ENCODE measurements at regions of chr1 and their contacts with region 1.

Region 1: GRCh38 chr1:8987881-8988617 is 38.2 kb downstream of the SLC2A7 start:
- DNase-seq: peak; percentile 78
- ATAC-seq: peak; percentile 68

Region 2: GRCh38 chr1:8831340-8831739 is 156.7 kb before region 1 on chr1:
- intact Hi-C with region 1: no loop called
- DNase-seq: no peak
- ATAC-seq: no peak

Region 3: DNA sequence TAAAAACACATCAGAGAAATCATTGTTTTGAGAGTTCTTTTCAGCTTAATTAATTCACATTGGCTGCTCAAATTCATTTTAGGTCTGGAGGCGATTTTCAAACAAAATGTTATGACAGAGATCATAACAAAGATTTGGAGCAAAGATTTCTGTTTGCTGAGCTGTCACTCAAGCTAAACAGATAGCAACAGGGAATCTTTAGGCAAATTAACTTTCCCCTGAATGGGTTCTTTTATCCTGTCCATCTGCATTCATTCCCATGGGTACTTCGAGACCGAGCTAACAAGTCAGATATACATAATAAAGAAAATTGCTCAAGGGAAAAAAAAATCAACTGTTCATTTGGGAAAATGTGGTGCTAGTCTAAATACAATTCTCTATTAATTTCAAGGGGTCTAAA is 72.6 kb before region 1 on chr1:
- intact Hi-C with region 1: loop called (anchors 5 kb)
- DNase-seq: no peak
- ATAC-seq: no peak

Measured in left ventricle myocardium superior (tissue), 1 donor.